Activated B cell treated with CpG ODN at 0.5 μM for 24 hours (primary cell): ENCODE measurements at regions of chr7 and their contacts with region 1.

Region 1: DNA sequence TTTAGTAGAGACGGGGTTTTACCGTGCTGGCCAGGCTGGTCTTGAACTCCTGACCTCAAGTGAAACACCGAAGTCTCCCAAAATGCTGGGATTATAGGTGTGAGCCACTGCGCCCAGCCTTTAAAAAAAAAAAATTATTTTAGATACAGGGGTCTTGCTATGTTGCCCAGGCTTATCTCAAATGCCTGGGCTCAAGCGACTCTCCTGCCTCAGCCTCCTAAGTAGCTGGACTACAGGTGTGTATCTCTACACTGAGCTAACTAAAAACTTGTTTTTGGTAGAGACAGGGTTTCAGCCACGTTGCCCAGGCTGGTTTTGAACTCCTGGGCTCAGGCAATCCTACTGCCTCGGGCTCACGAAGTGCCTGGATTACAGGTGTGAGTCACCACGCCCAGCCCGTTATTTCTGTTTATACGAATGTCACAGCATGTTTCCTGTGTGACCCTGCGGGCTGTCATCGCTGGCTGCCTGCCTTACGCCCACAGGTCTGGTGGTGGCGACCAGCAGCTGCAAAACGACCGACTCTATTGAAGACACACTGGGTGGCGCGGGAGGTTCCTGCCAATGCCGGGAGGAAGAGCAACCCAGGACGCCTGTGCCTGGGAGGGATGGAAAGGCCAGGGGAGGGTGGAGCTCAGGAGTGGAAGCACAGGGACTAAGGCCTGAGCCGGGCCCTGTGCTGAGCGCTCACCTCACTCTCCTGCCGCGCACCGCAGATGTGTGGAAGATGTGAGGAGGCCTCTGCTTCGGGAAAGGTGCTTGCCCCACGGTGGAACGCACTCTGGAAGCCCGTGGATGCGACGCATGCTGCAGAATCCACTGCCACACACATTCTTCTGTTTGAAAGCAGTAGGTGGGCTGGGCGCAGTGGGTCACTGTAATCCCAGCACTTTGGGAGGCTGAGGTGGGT is 32.8 kb downstream of the AMZ1 start:
- DNase-seq: peak; percentile 57
- ATAC-seq: peak; percentile 82
- H3K4me3 Mint-ChIP-seq: peak overlapping the region; percentile 26
- H3K27ac Mint-ChIP-seq: peak overlapping the region; percentile 84
- H3K4me1 Mint-ChIP-seq: peaks cover 56% of the 10 kb centered on the region
- H3K27me3 Mint-ChIP-seq: no peaks in the 10 kb centered on the region
- CTCF ChIP-seq: no peak

Region 2: GRCh38 chr7:2104107-2104710 is 616.6 kb before region 1 on chr7:
- CTCF ChIA-PET with region 1: no interaction called
- POLR2A ChIA-PET with region 1: no interaction called
- intact Hi-C with region 1: no loop called
- DNase-seq: peak; percentile 67
- ATAC-seq: peak; percentile 47
- H3K4me3 Mint-ChIP-seq: peak overlapping the region; percentile 61
- H3K27ac Mint-ChIP-seq: peak overlapping the region; percentile 71
- H3K4me1 Mint-ChIP-seq: peaks cover 41% of the 10 kb centered on the region
- H3K27me3 Mint-ChIP-seq: no peaks in the 10 kb centered on the region
- CTCF ChIP-seq: no peak

Region 3: DNA sequence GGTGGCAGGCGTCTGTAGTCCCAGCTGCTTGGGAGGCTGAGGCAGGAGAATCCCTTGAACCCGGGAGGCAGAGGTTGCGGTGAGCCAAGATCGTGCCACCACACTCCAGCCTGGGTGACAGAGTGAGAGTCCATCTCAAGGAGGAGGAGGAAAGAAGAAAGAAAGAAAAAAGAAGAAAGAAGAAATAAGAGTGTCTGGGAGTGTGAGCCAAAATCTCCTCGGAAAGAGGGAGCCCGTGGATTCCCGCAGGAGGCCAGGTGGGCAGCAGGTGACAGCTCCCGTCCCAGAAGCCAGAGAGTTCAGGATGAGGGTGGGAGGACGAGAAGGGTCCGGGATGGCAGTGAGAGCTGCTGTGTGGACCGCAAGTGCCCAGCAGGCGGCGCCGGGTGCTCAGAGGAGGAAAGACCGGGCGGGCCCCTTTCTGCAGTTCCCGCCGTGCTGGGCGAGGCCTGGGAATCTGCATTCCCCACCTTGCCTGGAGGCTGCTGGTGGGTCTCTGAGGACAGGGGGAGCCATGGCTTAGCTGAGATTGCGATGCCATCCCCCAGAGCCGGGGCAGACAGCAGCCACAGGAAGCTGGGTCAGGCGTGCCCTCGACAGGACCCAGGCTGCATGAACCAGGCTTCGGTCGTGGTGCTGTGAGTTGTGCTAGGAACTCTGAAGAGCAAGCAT is 50.0 kb before region 1 on chr7:
- CTCF ChIA-PET with region 1: interaction called, 8 read pairs
- POLR2A ChIA-PET with region 1: no interaction called
- intact Hi-C with region 1: loop called (anchors 1 kb)
- DNase-seq: peak; percentile 65
- ATAC-seq: peak; percentile 87
- H3K4me3 Mint-ChIP-seq: no peak overlapping the region
- H3K27ac Mint-ChIP-seq: no peak overlapping the region
- H3K4me1 Mint-ChIP-seq: peaks cover 7% of the 10 kb centered on the region
- H3K27me3 Mint-ChIP-seq: peaks cover 11% of the 10 kb centered on the region
- CTCF ChIP-seq: peak; percentile 64

Region 4: GRCh38 chr7:2734751-2735571 is 14.1 kb after region 1 on chr7:
- CTCF ChIA-PET with region 1: interaction called, 4 read pairs
- POLR2A ChIA-PET with region 1: interaction called, 4 read pairs
- intact Hi-C with region 1: loop called (anchors 2 kb)
- DNase-seq: peak; percentile 28
- ATAC-seq: peak; percentile 54
- H3K4me3 Mint-ChIP-seq: peak overlapping the region; percentile 33
- H3K27ac Mint-ChIP-seq: peak overlapping the region; percentile 54
- H3K4me1 Mint-ChIP-seq: peaks cover 49% of the 10 kb centered on the region
- H3K27me3 Mint-ChIP-seq: no peaks in the 10 kb centered on the region
- CTCF ChIP-seq: no peak

Region 5: DNA sequence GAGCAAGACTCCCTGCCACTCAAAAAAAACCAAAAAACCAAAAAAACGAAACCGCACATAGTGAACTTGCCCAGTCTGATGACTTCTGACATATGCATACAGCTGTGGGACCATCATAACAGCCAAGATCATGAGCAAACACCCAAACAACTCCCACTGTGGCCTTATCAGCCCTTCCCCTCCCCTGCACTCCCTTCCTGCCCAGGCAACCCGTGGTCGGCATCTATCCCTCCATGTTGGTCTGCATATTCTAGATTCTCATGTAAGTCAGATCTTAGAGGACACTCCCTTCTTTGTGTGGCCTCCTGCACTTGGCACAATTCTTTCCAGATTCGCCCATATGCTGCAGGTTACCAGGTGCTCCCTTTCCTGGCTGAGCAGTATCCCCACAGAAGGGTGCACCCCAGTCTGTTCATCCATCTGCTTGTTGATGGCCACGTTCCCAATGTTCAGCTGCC is 50.5 kb after region 1 on chr7:
- CTCF ChIA-PET with region 1: interaction called, 3 read pairs
- POLR2A ChIA-PET with region 1: interaction called, 5 read pairs
- intact Hi-C with region 1: loop called (anchors 2 kb)
- DNase-seq: no peak
- ATAC-seq: no peak
- H3K4me3 Mint-ChIP-seq: no peak overlapping the region
- H3K27ac Mint-ChIP-seq: peak overlapping the region; percentile 35
- H3K4me1 Mint-ChIP-seq: peaks cover 50% of the 10 kb centered on the region
- H3K27me3 Mint-ChIP-seq: no peaks in the 10 kb centered on the region
- CTCF ChIP-seq: no peak

Region 6: GRCh38 chr7:2844165-2844898 is 123.5 kb after region 1 on chr7 and contains the start of gene GNA12:
- CTCF ChIA-PET with region 1: no interaction called
- POLR2A ChIA-PET with region 1: interaction called, 3 read pairs
- intact Hi-C with region 1: loop called (anchors 5 kb)
- DNase-seq: peak; percentile 97
- ATAC-seq: peak; percentile 93
- H3K4me3 Mint-ChIP-seq: peak within 1 kb of the TSS; percentile 87
- H3K27ac Mint-ChIP-seq: peak within 1 kb of the TSS; percentile 83
- H3K4me1 Mint-ChIP-seq: peaks cover 52% of the 10 kb centered on the region
- H3K27me3 Mint-ChIP-seq: no peaks in the 10 kb centered on the region
- CTCF ChIP-seq: no peak
- total RNA-seq, gene GNA12: 52.3 and 54.6 TPM in 2 replicates